ENCODE measurements at regions of chr2 and their contacts with region 1.

Region 1: DNA sequence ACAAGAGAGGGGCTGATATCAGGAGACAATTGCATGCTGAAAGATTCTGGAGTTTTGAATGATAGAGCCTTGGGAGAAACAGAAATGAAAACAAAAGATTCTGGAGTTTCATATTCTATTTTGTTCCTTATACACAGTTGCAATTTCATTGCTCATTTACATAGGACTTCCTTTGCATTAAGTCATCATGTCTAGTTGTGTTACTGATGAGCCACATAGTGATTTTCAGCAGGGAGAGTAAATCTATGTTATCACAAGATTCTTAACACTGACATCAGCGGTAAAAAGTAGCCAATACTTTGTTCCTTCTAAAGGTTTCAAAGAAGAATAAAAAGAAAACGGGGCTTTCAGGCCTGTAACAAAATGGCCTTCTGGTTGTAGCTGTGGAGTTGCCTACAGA is 7.1 kb downstream of the ADAM17 start:
- DNase-seq: no peak
- H3K4me3 Mint-ChIP-seq: peak overlapping the region; percentile 33
- H3K27ac Mint-ChIP-seq: peak overlapping the region; percentile 66
- H3K4me1 Mint-ChIP-seq: peaks cover 66% of the 10 kb centered on the region
- H3K27me3 Mint-ChIP-seq: no peaks in the 10 kb centered on the region

Region 2: GRCh38 chr2:9494096-9494495 is 54.4 kb before region 1 on chr2:
- CTCF ChIA-PET with region 1: no interaction called
- intact Hi-C with region 1: loop called (anchors 1 kb)
- DNase-seq: no peak
- H3K4me3 Mint-ChIP-seq: no peak overlapping the region
- H3K27ac Mint-ChIP-seq: peak overlapping the region; percentile 61
- H3K4me1 Mint-ChIP-seq: peaks cover 32% of the 10 kb centered on the region
- H3K27me3 Mint-ChIP-seq: no peaks in the 10 kb centered on the region

Region 3: DNA sequence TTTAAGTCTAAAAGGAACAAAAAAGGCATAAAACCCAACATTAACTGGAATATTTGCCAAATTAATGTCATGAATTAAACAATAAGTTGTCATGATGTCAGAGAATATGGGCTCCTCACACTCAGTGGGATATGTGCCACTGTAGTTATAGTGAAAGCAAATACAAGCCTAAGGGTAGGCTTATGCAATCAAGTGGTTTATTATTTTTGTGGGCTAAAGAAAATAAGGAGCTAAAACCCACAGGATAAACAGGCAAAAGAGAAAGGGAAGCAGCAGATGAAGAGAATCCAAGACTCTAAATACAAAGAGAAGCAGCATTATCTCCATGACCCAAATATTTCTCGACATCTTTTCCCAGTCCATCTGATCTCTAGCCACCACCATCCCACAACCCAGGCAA is 64.8 kb after region 1 on chr2:
- CTCF ChIA-PET with region 1: no interaction called
- intact Hi-C with region 1: loop called (anchors 1 kb)
- DNase-seq: no peak
- H3K4me3 Mint-ChIP-seq: no peak overlapping the region
- H3K27ac Mint-ChIP-seq: no peak overlapping the region
- H3K4me1 Mint-ChIP-seq: peaks cover 78% of the 10 kb centered on the region
- H3K27me3 Mint-ChIP-seq: no peaks in the 10 kb centered on the region

Region 4: DNA sequence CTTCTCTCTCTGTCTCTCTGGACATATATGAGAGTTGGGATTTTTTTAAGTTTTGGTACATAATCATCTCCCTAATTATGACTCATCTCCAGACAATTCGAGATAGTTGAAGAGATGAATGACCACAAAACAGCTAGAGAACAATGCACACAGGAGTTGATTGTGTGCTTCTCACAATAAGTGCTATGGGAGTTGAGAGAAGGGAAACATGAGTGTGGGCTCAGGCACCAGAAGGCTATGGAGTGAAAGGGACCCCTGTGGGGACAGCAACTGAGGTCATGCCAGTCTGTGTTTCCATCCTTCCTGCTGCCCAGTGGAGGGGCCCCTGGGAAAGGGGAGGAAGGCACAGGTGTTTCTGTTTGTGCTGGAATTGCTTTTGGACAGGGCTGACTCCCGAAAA is 88.8 kb after region 1 on chr2:
- CTCF ChIA-PET with region 1: no interaction called
- intact Hi-C with region 1: no loop called
- DNase-seq: no peak
- H3K4me3 Mint-ChIP-seq: no peak overlapping the region
- H3K27ac Mint-ChIP-seq: no peak overlapping the region
- H3K4me1 Mint-ChIP-seq: peaks cover 10% of the 10 kb centered on the region
- H3K27me3 Mint-ChIP-seq: no peaks in the 10 kb centered on the region

Measured in activated naive CD4-positive, alpha-beta T cell treated with anti-CD3 and anti-CD28 coated beads for 36 hours (primary cell).